Activated CD4-positive, alpha-beta memory T cell treated with anti-CD3 and anti-CD28 coated beads, Interleukin-2, amount 10 ng/mL, durations not matched to agents 7 days and 5 days (primary cell): ENCODE measurements at regions of chr11 and their contacts with region 1.

Region 1: DNA sequence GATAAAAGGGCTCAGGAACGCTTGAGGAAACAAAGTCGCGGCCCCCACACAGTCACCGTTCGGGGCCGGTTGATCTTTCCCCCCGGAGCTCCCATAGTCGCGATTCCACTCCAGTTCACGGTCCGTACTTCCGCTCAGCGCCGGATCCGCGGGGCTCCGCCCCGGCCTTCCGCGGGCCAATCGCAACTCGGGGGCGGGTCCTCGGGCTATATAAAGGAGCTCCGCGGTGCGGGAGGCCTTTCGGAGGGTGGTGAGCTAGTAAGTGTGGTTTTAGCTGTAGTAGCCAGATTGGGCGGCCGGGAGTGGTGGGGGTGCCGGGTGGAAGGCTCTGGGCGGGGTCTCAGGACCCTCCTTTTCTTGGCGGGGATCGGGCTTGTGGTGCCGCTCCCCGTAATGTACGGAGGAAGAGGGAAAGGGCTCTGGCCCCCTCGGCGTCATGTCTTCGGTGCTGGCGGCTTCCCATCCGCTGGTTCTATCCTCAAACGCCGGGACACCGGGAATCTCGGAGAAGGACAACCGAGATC is at the starts of genes C11orf98 and CSKMT:
- DNase-seq: peak; percentile 96
- H3K4me3 Mint-ChIP-seq: peak within 1 kb of the TSS; percentile 93
- H3K27ac Mint-ChIP-seq: peak within 1 kb of the TSS; percentile 88
- H3K4me1 Mint-ChIP-seq: peaks cover 52% of the 10 kb centered on the region
- H3K27me3 Mint-ChIP-seq: no peaks in the 10 kb centered on the region
- total RNA-seq, gene C11orf98: 88.4 to 93.5 TPM
- total RNA-seq, gene CSKMT: 16.6 to 18.3 TPM

Region 2: GRCh38 chr11:62472012-62472884 is 192.9 kb before region 1 on chr11:
- CTCF ChIA-PET with region 1: no interaction called
- POLR2A ChIA-PET with region 1: no interaction called
- DNase-seq: no peak
- H3K4me3 Mint-ChIP-seq: no peak overlapping the region
- H3K27ac Mint-ChIP-seq: peak overlapping the region; percentile 36
- H3K4me1 Mint-ChIP-seq: peaks cover 7% of the 10 kb centered on the region
- H3K27me3 Mint-ChIP-seq: no peaks in the 10 kb centered on the region

Region 3: DNA sequence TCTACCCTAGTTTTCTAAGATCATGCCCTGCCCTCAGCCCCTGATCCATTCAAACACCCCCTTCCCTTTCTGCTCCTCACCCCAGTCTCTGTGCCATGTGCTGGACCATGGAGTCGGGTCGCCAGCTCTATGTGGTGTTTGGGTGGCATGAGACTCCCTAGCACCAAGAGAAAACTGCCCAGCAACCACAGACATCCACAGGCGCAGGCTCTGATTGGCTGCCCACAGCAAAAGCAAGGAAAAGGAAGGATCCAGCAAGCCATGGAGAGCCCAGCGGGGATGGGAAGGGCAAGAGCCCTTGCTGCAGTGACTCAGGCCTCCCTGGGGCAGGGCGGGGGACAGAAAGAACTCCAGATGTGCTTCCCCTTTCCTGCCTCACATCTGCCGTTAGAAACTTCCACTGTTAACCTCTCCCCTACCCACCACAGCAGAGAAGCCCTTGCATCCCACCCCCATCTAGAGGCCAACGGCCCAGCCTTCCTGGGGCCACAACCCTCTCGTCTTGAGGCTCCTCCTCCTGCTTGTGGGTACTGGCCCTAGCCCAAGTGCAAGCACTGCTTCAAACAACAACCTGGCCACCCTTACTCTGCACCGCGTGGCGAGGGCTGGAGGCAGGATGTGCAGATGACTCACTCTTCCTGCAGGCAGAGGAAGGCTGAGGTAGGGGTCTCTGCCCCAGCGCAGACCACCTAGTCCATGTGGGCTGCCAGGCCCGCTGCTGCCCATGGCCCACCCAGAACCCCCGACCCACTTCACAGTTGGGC is 108.8 kb before region 1 on chr11:
- CTCF ChIA-PET with region 1: interaction called, 3 read pairs
- POLR2A ChIA-PET with region 1: interaction called, 25 read pairs
- DNase-seq: peak; percentile 94
- H3K4me3 Mint-ChIP-seq: peak overlapping the region; percentile 74
- H3K27ac Mint-ChIP-seq: peak overlapping the region; percentile 99
- H3K4me1 Mint-ChIP-seq: peaks cover 99% of the 10 kb centered on the region
- H3K27me3 Mint-ChIP-seq: no peaks in the 10 kb centered on the region

Region 4: DNA sequence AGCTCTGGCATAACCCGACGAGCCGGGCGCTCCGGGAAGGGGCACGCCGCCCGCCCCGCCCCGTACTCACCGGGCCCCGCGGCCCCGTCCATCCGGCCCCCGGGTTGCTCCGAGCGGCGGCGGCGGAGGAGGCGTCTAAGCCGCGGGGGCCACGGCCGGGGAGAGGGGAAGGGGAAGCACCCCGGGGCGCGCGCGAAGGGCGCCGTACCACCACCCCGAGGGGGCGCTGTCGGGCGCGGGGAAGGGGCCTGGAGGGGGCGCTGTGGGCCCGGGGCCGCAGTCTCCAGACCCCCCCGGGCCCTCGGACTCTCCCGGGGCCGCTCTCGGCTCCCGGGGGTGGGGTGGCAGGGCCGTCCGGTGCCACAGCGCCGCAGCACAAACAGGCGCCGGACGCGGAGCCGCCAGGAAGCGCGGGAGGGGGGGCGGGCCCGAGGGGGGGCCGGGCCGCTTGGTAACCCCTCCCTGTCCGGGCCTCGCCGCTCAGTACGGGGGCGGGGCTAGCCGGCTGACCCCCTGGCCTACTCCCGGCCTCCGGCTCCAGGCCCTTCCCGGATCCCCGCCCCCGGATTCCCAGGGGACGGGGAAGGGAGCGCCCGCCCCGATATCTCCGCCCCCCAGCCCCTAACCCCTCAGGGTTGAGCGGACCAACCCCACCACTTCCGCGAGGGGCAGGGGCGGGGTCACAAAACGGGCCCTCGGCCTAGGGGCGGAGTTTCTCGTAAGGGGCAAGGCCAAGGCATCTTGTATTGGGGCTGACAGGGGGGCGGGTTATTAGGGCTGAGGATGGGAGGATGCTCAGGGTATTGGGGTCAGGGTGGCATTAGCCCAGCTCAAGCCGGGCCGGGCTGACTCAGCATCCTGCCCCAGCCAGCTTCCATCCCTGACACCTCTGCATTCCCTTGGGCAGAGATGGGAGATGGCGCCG is 52.5 kb before region 1 on chr11 and contains the starts of genes EML3 and ROM1:
- CTCF ChIA-PET with region 1: interaction called, 6 read pairs
- POLR2A ChIA-PET with region 1: interaction called, 41 read pairs
- DNase-seq: peak; percentile 91
- H3K4me3 Mint-ChIP-seq: peak within 1 kb of the TSS; percentile 97
- H3K27ac Mint-ChIP-seq: peak within 1 kb of the TSS; percentile 93
- H3K4me1 Mint-ChIP-seq: peaks cover 65% of the 10 kb centered on the region
- H3K27me3 Mint-ChIP-seq: no peaks in the 10 kb centered on the region
- total RNA-seq, gene EML3: 121 to 122 TPM
- total RNA-seq, gene ROM1: 1.6 to 2.2 TPM

Region 5: DNA sequence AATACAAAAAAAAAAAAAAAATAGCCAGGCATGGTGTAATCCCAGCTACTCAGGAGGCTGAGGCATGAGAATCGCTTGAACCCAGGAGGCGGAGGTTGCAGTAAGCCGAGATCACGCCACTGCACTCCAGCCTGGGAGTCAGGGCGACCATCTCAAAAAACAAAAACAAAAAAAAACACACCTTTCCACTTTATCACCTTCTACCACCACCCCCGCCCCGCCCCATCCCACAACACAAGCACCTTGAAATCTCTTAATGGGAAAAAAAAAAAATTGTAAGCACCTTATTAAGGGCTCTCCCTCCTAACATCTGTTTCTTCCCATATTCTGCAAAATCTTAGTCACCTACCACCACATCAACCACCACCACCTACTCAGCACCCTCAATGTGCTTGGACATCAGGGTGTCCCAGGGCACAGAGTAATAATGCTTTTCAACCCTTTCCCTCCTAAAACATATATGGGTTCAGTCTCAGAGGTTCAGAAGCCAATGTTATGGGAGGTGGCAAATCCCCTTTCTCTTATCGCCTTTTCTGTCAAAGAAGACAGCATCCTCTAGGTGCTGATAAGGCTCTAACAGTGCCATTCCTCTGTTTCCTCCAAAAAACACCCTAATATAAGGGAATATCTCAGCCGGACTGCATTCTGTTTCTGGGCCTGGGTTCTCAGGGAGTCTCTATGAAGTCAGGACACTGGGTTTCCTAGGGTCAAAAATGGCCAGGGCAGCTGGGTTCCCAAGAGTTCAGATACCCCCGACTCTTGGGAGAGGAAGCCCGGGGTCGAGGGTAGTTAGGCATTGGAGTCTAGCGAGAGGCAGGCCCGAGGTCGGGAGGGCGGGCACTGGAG is 12.8 kb before region 1 on chr11:
- CTCF ChIA-PET with region 1: interaction called, 16 read pairs
- POLR2A ChIA-PET with region 1: interaction called, 212 read pairs
- DNase-seq: peak; percentile 47
- H3K4me3 Mint-ChIP-seq: peak overlapping the region; percentile 91
- H3K27ac Mint-ChIP-seq: peak overlapping the region; percentile 85
- H3K4me1 Mint-ChIP-seq: peaks cover 34% of the 10 kb centered on the region
- H3K27me3 Mint-ChIP-seq: no peaks in the 10 kb centered on the region

Region 6: DNA sequence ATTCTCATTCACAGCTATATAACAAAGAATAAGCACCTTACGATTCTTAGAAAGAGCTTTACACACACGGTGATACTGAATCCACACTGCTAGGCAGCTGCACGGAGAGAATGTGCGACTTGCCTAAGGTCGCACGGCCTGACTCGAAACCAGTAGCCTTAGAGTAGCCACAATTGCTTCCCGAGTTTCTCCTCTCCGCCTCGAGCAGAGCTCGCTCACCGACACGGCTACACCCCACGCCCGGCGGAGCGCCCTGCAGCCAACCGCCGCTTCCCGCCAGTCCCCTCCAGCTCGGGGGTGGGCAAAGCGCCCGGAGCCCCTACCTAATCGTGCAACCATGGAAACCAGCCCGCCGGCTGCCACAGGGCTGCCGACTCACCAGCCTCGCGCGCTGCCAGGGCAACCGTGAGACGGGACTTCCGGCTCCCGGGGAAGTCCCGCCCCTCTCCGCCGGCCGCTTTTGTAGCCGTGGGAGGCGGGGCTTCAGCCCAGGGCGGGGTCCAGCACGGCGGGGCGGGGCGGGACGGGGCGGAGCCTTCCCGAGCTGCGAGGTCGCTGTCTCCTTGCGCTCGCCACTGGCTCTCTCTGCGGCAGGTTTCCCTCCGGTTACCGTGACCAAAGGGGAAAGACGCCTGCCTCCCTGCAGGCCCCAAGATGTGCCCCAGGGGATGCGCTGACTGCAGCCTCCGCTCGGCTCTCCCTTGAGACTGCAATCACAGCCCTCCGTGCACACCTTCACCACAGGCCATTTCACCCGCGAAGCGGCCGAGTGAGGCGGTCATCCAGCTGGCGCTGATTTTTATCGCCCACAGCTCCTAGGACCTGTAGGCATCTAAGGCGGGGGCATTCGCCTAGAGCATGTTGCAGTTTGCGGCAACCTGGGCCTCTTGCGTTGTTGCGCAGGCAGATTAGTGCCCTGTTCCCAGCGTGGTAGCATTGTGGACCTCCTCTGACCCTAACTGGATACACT is 41.0 kb after region 1 on chr11:
- CTCF ChIA-PET with region 1: interaction called, 4 read pairs
- POLR2A ChIA-PET with region 1: interaction called, 61 read pairs
- DNase-seq: peak; percentile 96
- H3K4me3 Mint-ChIP-seq: peak overlapping the region; percentile 92
- H3K27ac Mint-ChIP-seq: peak overlapping the region; percentile 69
- H3K4me1 Mint-ChIP-seq: peaks cover 56% of the 10 kb centered on the region
- H3K27me3 Mint-ChIP-seq: no peaks in the 10 kb centered on the region

Region 7: GRCh38 chr11:62855571-62856332 is 190.6 kb after region 1 on chr11:
- CTCF ChIA-PET with region 1: no interaction called
- POLR2A ChIA-PET with region 1: interaction called, 73 read pairs
- DNase-seq: peak; percentile 99
- H3K4me3 Mint-ChIP-seq: peak overlapping the region; percentile 97
- H3K27ac Mint-ChIP-seq: peak overlapping the region; percentile 96
- H3K4me1 Mint-ChIP-seq: peaks cover 75% of the 10 kb centered on the region
- H3K27me3 Mint-ChIP-seq: no peaks in the 10 kb centered on the region